Heart right ventricle (tissue), 16 donors: ENCODE measurements at regions of chr12 and their contacts with region 1.

Region 1: GRCh38 chr12:121620328-121620891 is 5.9 kb upstream of the ORAI1 start:
- DNase-seq: no peak
- ATAC-seq: peak in 4 of 8 donors; percentile 25 to 46 (median 40)
- H3K4me3 ChIP-seq: no peak overlapping the region
- H3K27ac ChIP-seq: no peak overlapping the region
- H3K4me1 ChIP-seq: peaks cover 0 to 25% (median 8%) of the 10 kb centered on the region in 9 donors
- H3K27me3 ChIP-seq: no peaks in the 10 kb centered on the region
- CTCF ChIP-seq: no peak

Region 2: DNA sequence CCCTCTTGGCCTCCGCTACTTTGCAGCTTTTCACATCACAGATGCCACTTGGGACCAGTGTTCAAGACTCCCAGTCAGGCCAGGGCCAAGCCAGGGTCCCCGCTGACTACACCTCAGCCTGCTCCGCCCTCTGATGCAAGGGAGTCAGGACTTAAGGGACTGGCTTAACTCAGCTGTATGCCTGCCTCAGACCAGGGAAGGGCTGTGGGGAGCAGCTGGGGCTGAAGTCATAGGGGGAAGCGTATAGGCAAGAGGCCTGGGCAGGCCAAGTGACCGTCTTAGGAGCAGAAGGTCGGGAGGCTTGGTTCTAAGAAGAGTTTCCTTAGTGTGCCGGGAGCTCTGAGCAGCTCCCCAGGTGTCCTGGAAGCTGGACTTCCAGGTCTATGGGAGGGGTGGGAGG is 61.5 kb before region 1 on chr12:
- intact Hi-C with region 1: loop called in 4 of 10 experiments (anchors 5 to 10 kb)
- DNase-seq: no peak
- ATAC-seq: peak in 1 of 8 donors; percentile 52
- H3K4me3 ChIP-seq: no peak overlapping the region
- H3K27ac ChIP-seq: no peak overlapping the region
- H3K4me1 ChIP-seq: peaks cover 0 to 7% (median 0%) of the 10 kb centered on the region in 9 donors
- H3K27me3 ChIP-seq: no peaks in the 10 kb centered on the region
- CTCF ChIP-seq: no peak

Region 3: GRCh38 chr12:121579981-121580868 is 40.2 kb before region 1 on chr12:
- intact Hi-C with region 1: loop called in 5 of 10 experiments (anchors 5 kb)
- DNase-seq: peak; percentile 68 to 77
- ATAC-seq: peak; percentile 57 to 76 (median 70)
- H3K4me3 ChIP-seq: peak overlapping the region; percentile 42 to 92 (median 74)
- H3K27ac ChIP-seq: peak overlapping the region; percentile 66 to 93 (median 84)
- H3K4me1 ChIP-seq: peaks cover 13 to 57% (median 48%) of the 10 kb centered on the region in 9 donors
- H3K27me3 ChIP-seq: no peaks in the 10 kb centered on the region
- CTCF ChIP-seq: no peak

Region 4: GRCh38 chr12:121776190-121777098 is 156.0 kb after region 1 on chr12:
- intact Hi-C with region 1: no loop called
- DNase-seq: peak; percentile 78 to 88
- ATAC-seq: peak; percentile 33 to 71 (median 60)
- H3K4me3 ChIP-seq: no peak overlapping the region
- H3K27ac ChIP-seq: peak overlapping the region in 3 of 10 donors; percentile 1 to 32 (median 6)
- H3K4me1 ChIP-seq: peaks cover 2 to 46% (median 19%) of the 10 kb centered on the region in 9 donors
- H3K27me3 ChIP-seq: no peaks in the 10 kb centered on the region
- CTCF ChIP-seq: peak; percentile 79 to 93 (median 87)